Ovary (tissue), 10 donors: ENCODE measurements at regions of chr1 and their contacts with region 1.

Region 1: GRCh38 chr1:240027059-240027462 is 64.6 kb upstream of the FMN2 start:
- DNase-seq: peak in 2 of 5 donors; percentile 30 to 56
- H3K4me3 ChIP-seq: no peak overlapping the region
- H3K27ac ChIP-seq: no peak overlapping the region
- H3K4me1 ChIP-seq: no peaks in the 10 kb centered on the region
- H3K27me3 ChIP-seq: no peaks in the 10 kb centered on the region
- CTCF ChIP-seq: peak in 2 of 3 donors; percentile 18 to 62
- EP300 ChIP-seq: no peak
- POLR2A ChIP-seq: no peak

Region 2: GRCh38 chr1:239706245-239706892 is 320.7 kb before region 1 on chr1:
- intact Hi-C with region 1: no loop called
- DNase-seq: no peak
- H3K4me3 ChIP-seq: no peak overlapping the region
- H3K27ac ChIP-seq: no peak overlapping the region
- H3K4me1 ChIP-seq: no peaks in the 10 kb centered on the region
- H3K27me3 ChIP-seq: no peaks in the 10 kb centered on the region
- CTCF ChIP-seq: no peak
- EP300 ChIP-seq: no peak
- POLR2A ChIP-seq: no peak

Region 3: DNA sequence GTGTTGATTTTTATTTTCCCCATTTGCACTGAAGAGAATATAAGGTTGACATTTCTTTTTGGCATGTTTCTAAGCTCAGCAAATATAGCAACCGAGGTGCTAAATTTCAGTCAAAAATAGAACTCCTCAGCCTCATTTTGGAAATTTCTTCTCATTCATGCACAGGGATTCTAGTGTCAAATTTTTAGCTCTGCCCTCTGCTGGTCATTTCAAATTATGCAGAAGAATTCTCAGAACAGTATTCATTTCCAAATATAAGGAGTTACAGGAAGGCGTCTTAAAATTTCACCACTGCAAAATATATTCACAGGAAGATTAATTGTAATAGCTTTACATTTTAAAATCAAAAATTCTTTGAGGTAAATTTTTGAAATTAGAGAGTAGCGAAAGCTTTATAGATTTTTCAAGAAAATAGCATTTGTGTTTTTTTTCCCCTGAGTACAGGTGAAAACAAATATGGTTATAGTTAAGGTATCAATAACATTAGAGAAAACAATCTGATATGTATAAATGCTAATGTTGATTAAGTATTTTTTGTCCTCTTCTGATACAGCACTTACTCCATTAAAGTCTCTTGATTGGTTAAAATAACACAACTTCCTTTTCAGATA is 122.5 kb after region 1 on chr1:
- intact Hi-C with region 1: loop called in 2 of 4 experiments (anchors 10 kb)
- DNase-seq: no peak
- H3K4me3 ChIP-seq: no peak overlapping the region
- H3K27ac ChIP-seq: no peak overlapping the region
- H3K4me1 ChIP-seq: no peaks in the 10 kb centered on the region
- H3K27me3 ChIP-seq: no peaks in the 10 kb centered on the region
- CTCF ChIP-seq: peak in 1 of 3 donors; percentile 33
- EP300 ChIP-seq: no peak
- POLR2A ChIP-seq: no peak

Region 4: GRCh38 chr1:240189386-240189989 is 162.4 kb after region 1 on chr1:
- intact Hi-C with region 1: loop called in 1 of 4 experiments (anchors 10 kb)
- DNase-seq: no peak
- H3K4me3 ChIP-seq: no peak overlapping the region
- H3K27ac ChIP-seq: no peak overlapping the region
- H3K4me1 ChIP-seq: no peaks in the 10 kb centered on the region
- H3K27me3 ChIP-seq: no peaks in the 10 kb centered on the region
- CTCF ChIP-seq: peak in 2 of 3 donors; percentile 38 to 60
- EP300 ChIP-seq: no peak
- POLR2A ChIP-seq: no peak

Region 5: GRCh38 chr1:240285541-240285940 is 258.5 kb after region 1 on chr1:
- intact Hi-C with region 1: no loop called
- DNase-seq: no peak
- H3K4me3 ChIP-seq: no peak overlapping the region
- H3K27ac ChIP-seq: no peak overlapping the region
- H3K4me1 ChIP-seq: no peaks in the 10 kb centered on the region
- H3K27me3 ChIP-seq: no peaks in the 10 kb centered on the region
- CTCF ChIP-seq: no peak
- EP300 ChIP-seq: no peak
- POLR2A ChIP-seq: no peak

Region 6: DNA sequence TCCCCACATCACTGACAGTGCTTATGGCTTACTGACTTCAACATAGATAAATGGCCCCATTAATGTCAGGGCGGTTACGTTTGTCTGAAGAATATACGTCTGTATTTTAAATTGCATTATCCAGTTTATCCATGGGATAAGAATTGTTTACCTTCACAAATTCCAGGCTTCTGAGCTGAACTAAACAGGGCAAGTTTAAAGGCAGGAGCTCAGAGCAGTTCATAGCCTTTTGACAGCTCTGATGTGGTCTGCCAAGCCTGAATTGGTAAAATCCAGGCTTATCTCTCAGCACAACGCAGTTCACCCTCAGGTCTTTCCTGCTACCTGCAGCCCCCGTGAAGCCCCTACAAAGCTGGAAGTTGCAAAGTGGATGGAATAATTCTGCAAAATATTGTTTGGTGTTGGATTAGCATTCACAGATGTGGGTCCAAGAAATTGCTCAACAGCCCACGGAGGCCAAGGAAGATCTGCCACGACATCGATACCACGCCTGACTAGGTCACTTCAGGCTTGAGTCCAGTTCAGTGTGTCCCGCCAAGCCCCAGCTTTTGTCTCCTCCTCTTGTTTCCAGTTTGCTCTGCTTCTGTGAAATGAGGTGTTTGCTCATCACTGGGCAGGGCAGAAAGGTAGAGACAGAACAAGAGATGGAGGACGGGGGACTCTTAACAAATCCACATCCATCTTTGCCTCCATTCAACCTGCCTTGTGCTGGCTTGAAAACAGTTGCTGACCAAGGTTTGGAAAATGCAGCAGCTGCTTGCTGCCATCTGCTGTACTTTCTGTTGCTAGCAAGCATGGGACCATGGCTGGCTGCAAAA is 664.7 kb after region 1 on chr1:
- intact Hi-C with region 1: loop called in 2 of 4 experiments (anchors 10 kb)
- DNase-seq: peak; percentile 18 to 61 (median 44)
- H3K4me3 ChIP-seq: no peak overlapping the region
- H3K27ac ChIP-seq: no peak overlapping the region
- H3K4me1 ChIP-seq: no peaks in the 10 kb centered on the region
- H3K27me3 ChIP-seq: no peaks in the 10 kb centered on the region
- CTCF ChIP-seq: peak in 2 of 3 donors; percentile 21 to 68
- EP300 ChIP-seq: no peak
- POLR2A ChIP-seq: no peak